ENCODE measurements at regions of chr10 and their contacts with region 1.

Region 1: DNA sequence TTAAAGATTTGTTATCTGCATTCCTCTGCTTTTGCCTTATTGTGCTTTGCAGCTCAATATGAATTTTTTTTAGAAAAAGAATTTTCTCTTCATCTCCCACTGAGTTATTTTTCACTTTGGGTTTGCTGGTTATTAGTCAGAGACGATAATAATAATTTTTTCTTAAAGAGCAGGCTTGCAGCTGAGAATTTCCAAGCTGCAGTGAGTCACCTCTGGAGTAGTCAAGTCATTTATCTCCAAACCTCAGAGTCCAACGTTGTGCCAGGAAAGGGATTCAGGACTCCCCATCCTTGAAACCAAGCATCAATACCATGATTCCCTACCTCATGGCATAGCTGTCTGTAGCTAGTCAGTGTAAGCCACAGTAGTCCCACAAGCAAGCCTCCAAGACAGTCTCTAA is 15.2 kb upstream of the EGR2 start:
- DNase-seq: no peak
- ATAC-seq: no peak
- H3K4me3 ChIP-seq: no peak overlapping the region
- H3K27ac ChIP-seq: no peak overlapping the region
- H3K4me1 ChIP-seq: no peaks in the 10 kb centered on the region
- H3K27me3 ChIP-seq: no peaks in the 10 kb centered on the region
- CTCF ChIP-seq: no peak
- POLR2A ChIP-seq: no peak

Region 2: GRCh38 chr10:62437696-62438095 is 393.6 kb before region 1 on chr10:
- in situ Hi-C with region 1: loop called in 1 of 4 experiments (anchors 25 kb)
- intact Hi-C with region 1: no loop called
- DNase-seq: no peak
- ATAC-seq: peak in 1 of 2 donors; percentile 60
- H3K4me3 ChIP-seq: no peak overlapping the region
- H3K27ac ChIP-seq: no peak overlapping the region
- H3K4me1 ChIP-seq: peaks cover 0 to 3% of the 10 kb centered on the region in 2 donors
- H3K27me3 ChIP-seq: no peaks in the 10 kb centered on the region
- CTCF ChIP-seq: peak; percentile 57 to 77 (median 64)
- POLR2A ChIP-seq: no peak

Region 3: GRCh38 chr10:62610649-62611229 is 220.6 kb before region 1 on chr10:
- in situ Hi-C with region 1: loop called in 2 of 4 experiments (anchors 10 kb)
- intact Hi-C with region 1: no loop called
- DNase-seq: peak in 1 of 2 donors; percentile 23
- ATAC-seq: no peak
- H3K4me3 ChIP-seq: no peak overlapping the region
- H3K27ac ChIP-seq: no peak overlapping the region
- H3K4me1 ChIP-seq: no peaks in the 10 kb centered on the region
- H3K27me3 ChIP-seq: no peaks in the 10 kb centered on the region
- CTCF ChIP-seq: peak in 4 of 5 experiments; percentile 49 to 61 (median 54)
- POLR2A ChIP-seq: no peak

Measured in gastrocnemius medialis (tissue), 4 donors.